ENCODE measurements at regions of chr15 and their contacts with region 1.

Region 1: GRCh38 chr15:101723874-101724674 is at the start of gene TARS3:
- DNase-seq: peak; percentile 100

Region 2: GRCh38 chr15:101710806-101711205 is 13.3 kb before region 1 on chr15:
- CTCF ChIA-PET with region 1: no interaction called
- POLR2A ChIA-PET with region 1: interaction called, 17 read pairs
- DNase-seq: no peak

Region 3: GRCh38 chr15:101765772-101766456 is 41.8 kb after region 1 on chr15:
- CTCF ChIA-PET with region 1: no interaction called
- POLR2A ChIA-PET with region 1: no interaction called
- DNase-seq: no peak